Activated CD8-positive, alpha-beta T cell treated with anti-CD3 and anti-CD28 coated beads for 36 hours (primary cell): ENCODE measurements at regions of chr1 and their contacts with region 1.

Region 1: DNA sequence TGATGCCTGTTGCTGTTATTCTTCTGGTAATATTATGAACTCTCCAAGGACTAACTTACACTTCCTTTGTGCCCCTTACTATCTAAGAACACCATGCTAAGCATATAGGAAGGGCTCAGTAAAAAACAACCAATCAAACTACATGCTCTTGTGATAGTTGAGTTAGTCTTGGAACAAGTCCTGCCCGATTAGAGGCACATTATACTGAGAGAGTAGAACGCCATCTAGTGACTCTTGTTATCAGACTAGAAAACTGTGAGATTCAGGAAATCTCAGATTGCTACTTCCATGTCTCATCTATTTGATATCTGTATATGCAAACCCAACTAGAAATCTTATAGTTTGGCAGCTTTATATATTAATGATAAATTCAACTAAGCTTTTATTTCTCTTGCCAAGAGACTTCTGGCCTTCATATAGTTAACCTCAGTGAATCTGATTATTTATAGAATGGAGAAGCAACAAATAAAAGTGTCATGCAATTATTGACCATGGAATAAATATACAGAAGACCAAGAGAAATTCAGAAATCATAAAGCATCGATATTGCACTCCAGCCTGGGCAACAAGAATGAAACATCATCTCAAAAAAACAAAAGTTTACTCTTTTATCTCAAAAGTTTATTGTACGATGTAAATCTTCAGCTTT is 7.8 kb upstream of the SRRM1 start:
- DNase-seq: no peak
- ATAC-seq: peak; percentile 83
- H3K4me3 Mint-ChIP-seq: no peak overlapping the region
- H3K27ac Mint-ChIP-seq: no peak overlapping the region
- H3K4me1 Mint-ChIP-seq: peaks cover 10% of the 10 kb centered on the region
- H3K27me3 Mint-ChIP-seq: no peaks in the 10 kb centered on the region
- CTCF ChIP-seq: peak; percentile 66

Region 2: GRCh38 chr1:24541711-24542346 is 93.5 kb before region 1 on chr1:
- CTCF ChIA-PET with region 1: no interaction called
- POLR2A ChIA-PET with region 1: interaction called, 3 read pairs
- intact Hi-C with region 1: loop called (anchors 10 kb)
- DNase-seq: peak; percentile 45
- ATAC-seq: no peak
- H3K4me3 Mint-ChIP-seq: no peak overlapping the region
- H3K27ac Mint-ChIP-seq: peak overlapping the region; percentile 84
- H3K4me1 Mint-ChIP-seq: peaks cover 60% of the 10 kb centered on the region
- H3K27me3 Mint-ChIP-seq: no peaks in the 10 kb centered on the region
- CTCF ChIP-seq: peak; percentile 83

Region 3: DNA sequence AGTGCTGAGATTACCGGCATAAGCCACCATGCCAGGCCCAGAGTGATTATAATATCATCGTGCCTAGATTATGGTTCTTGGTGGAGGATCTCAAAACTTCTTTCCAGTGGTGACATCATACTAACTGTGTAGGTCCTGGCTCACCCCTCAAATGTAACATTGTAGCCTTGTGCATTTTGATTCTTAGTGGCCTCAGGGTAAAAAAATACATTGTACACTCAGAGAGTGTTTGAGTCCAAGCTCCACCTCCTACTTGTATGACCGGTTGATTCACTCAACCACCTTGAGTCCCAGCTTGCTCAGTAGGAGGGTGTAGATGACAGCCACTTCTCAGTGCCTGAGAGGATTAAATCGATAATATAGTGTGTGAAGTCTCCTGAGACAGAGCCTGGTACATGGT is 41.2 kb before region 1 on chr1:
- CTCF ChIA-PET with region 1: interaction called, 3 read pairs
- POLR2A ChIA-PET with region 1: no interaction called
- intact Hi-C with region 1: loop called (anchors 5 kb)
- DNase-seq: no peak
- ATAC-seq: peak; percentile 27
- H3K4me3 Mint-ChIP-seq: no peak overlapping the region
- H3K27ac Mint-ChIP-seq: no peak overlapping the region
- H3K4me1 Mint-ChIP-seq: no peaks in the 10 kb centered on the region
- H3K27me3 Mint-ChIP-seq: peaks cover 3% of the 10 kb centered on the region
- CTCF ChIP-seq: no peak

Region 4: DNA sequence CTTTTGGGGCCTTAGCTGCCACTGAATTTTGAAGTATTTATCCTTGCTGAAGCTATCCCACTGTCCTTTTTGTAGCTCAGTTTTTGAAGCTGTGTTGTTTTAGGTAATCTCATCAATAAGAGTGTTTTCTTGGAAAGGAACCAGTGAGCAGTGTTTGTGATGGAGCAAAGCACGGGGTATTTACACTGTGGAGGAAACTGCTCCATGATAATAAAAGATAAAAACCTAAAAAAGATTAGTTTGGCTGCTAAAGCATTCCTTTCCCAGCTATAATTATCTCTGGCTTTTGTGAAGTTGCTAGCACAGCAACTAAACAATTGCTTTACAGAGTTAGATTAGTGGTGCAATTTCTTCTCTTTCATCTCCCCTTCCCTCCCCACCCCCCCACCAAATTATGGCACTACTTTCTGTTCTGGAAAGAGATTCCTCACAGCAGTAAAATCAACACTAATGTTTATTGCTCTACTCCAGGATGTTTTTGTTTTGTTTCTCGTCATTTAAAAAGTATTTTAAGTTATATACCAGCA is 29.3 kb after region 1 on chr1:
- CTCF ChIA-PET with region 1: no interaction called
- POLR2A ChIA-PET with region 1: no interaction called
- intact Hi-C with region 1: no loop called
- DNase-seq: no peak
- ATAC-seq: no peak
- H3K4me3 Mint-ChIP-seq: no peak overlapping the region
- H3K27ac Mint-ChIP-seq: no peak overlapping the region
- H3K4me1 Mint-ChIP-seq: peaks cover 12% of the 10 kb centered on the region
- H3K27me3 Mint-ChIP-seq: no peaks in the 10 kb centered on the region
- CTCF ChIP-seq: no peak